Astrocyte of the cerebellum (primary cell): ENCODE measurements at regions of chr7 and their contacts with region 1.

Region 1: DNA sequence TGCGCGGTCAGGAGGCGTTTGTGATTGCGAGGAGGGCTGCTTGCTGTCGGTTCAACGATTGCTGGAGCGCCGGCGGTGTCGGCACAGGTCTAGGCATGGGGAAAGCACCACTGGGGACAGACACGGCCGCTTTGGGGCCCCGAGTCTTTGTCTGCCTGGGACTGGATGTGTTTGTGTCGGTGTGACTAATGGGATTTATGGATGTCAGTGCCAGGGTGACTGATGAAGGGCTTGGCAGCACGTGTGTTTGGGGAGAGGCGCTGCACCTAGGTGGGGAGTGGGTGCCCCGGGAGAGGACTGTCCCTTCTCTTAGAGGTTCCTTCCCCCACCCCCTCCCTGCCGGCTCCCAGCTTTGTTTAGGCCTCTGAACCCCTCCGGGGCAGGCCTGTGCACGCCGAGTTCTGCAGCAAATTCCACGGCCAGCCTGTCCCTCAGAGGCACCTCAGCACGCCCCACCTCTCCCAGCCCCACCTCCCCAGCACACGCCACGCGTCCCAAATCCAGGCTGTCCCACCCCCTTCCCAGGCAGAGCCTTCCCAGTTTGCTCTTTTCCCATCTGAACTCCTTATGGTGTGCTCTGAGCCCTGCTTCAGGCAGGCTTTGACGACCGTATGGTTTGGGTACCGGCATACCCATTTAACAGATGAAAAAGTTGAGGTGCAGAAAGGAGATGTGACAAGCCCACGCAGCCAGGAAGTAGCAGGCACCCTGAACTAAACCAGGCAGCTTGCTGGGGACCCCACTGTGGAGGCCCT is 6.4 kb upstream of the TNRC18 start:
- DNase-seq: no peak
- H3K4me3 ChIP-seq: peak overlapping the region; percentile 75
- CTCF ChIP-seq: no peak

Region 2: DNA sequence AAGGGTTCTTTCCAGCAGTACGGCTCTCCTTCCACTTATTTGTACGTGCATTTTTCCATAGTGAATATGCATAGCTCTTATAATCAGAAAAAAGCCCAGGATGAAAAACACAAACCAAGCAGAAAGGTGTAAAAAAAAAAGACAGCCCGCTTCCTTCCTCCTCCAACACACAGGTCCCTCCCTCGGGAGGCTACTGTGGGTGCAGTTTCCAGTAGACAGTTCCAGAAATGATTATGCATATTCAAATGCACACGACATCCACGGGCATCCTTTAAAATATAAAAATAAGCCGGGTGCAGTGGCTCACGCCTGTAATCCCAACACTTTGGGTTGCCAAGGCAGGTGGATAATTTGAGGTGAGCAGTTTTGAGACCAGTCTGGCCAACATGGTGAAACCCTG is 66.3 kb before region 1 on chr7:
- in situ Hi-C with region 1: loop called (anchors 5 kb)
- DNase-seq: no peak
- H3K4me3 ChIP-seq: no peak overlapping the region
- CTCF ChIP-seq: no peak